SK-N-SH (cell line): ENCODE measurements at regions of chr19 and their contacts with region 1.

Region 1: GRCh38 chr19:7535035-7535992 is at the start of gene PNPLA6:
- DNase-seq: peak; percentile 97
- H3K4me3 ChIP-seq: peak within 1 kb of the TSS; percentile 85 to 94
- H3K27ac ChIP-seq: peak within 1 kb of the TSS; percentile 87 to 92
- H3K4me1 ChIP-seq: peaks cover 0 to 15% of the 10 kb centered on the region in 2 experiments; a peak in 2 of 4 replicates
- H3K27me3 ChIP-seq: no peaks in the 10 kb centered on the region
- CTCF ChIP-seq: no peak
- EP300 ChIP-seq: no peak
- RAD21 ChIP-seq: no peak
- polyA plus RNA-seq, gene PNPLA6: 40.5 and 90.5 TPM in 2 replicates

Region 2: GRCh38 chr19:7460562-7460966 is 74.8 kb before region 1 on chr19:
- CTCF ChIA-PET with region 1: no interaction called
- POLR2A ChIA-PET with region 1: no interaction called
- DNase-seq: no peak
- H3K4me3 ChIP-seq: no peak overlapping the region
- H3K27ac ChIP-seq: no peak overlapping the region
- H3K4me1 ChIP-seq: no peaks in the 10 kb centered on the region
- H3K27me3 ChIP-seq: no peaks in the 10 kb centered on the region
- CTCF ChIP-seq: no peak
- EP300 ChIP-seq: no peak
- RAD21 ChIP-seq: no peak

Region 3: DNA sequence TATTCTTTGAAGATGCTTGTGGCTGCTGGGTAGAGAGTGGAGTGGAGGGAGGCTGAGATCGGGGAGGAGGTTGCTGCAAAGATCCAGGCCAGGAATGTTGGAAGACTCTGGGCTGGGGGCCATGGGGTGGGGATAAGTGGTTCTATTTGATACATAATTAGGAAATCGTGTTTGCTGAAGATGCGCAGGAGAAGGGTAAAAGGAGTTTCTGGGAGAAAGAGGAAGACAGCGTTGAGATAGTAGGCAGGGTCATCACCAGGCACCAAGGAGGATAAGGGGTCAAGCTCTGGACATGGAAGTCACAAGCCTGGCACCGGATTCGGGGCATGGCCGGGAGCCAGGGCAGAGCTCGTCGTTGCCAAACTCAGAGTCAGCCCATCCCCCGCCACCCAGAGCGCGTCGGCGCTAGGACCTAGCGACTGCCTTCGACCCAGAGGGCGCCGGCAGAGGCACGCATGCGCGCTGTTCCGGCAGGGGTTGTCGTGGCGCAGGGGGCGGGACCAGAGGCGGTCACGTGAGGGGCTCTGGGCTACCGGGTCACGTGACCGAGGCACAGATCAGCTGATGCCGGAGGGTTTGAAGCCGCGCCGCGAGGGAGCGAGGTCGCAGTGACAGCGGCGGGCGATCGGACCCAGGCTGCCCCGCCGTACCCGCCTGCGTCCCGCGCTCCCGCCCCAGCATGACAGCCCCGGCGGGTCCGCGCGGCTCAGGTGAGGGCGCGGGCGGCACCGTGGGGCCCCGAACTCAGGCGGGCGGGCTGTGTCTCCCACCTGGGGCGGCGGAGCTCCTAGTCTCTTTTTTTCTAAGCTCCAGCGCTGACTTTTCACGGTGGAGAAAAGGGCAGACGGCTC is 13.0 kb before region 1 on chr19 and contains the start of gene MCOLN1:
- CTCF ChIA-PET with region 1: interaction called, 25 read pairs
- POLR2A ChIA-PET with region 1: interaction called, 16 read pairs
- DNase-seq: peak; percentile 100
- H3K4me3 ChIP-seq: peak within 1 kb of the TSS; percentile 79 to 89
- H3K27ac ChIP-seq: peak within 1 kb of the TSS; percentile 38 to 90; a peak in 3 of 4 replicates
- H3K4me1 ChIP-seq: peaks cover 5 to 17% of the 10 kb centered on the region in 2 experiments; a peak in 2 of 4 replicates
- H3K27me3 ChIP-seq: no peaks in the 10 kb centered on the region
- CTCF ChIP-seq: no peak
- EP300 ChIP-seq: no peak
- RAD21 ChIP-seq: no peak
- polyA plus RNA-seq, gene MCOLN1: 28.4 and 28.9 TPM in 2 replicates